Natural killer cell (primary cell): ENCODE measurements at regions of chr12 and their contacts with region 1.

Region 1: GRCh38 chr12:32455607-32456071 is 56.3 kb downstream of the FGD4 start:
- DNase-seq: peak in 1 of 2 donors; percentile 64
- ATAC-seq: peak in 2 of 3 donors; percentile 49 to 53
- H3K4me3 ChIP-seq: no peak overlapping the region
- H3K4me3 Mint-ChIP-seq: peak overlapping the region; percentile 17
- H3K27ac ChIP-seq: no peak overlapping the region
- H3K27ac Mint-ChIP-seq: no peak overlapping the region
- H3K4me1 ChIP-seq: no peaks in the 10 kb centered on the region
- H3K4me1 Mint-ChIP-seq: no peaks in the 10 kb centered on the region
- H3K27me3 ChIP-seq: no peaks in the 10 kb centered on the region
- H3K27me3 Mint-ChIP-seq: peaks cover 0 to 3% of the 10 kb centered on the region in 2 donors
- CTCF ChIP-seq: peak; percentile 71

Region 2: GRCh38 chr12:32016680-32017482 is 438.8 kb before region 1 on chr12:
- intact Hi-C with region 1: no loop called
- DNase-seq: no peak
- ATAC-seq: no peak
- H3K4me3 ChIP-seq: no peak overlapping the region
- H3K4me3 Mint-ChIP-seq: no peak overlapping the region
- H3K27ac ChIP-seq: no peak overlapping the region
- H3K27ac Mint-ChIP-seq: no peak overlapping the region
- H3K4me1 ChIP-seq: no peaks in the 10 kb centered on the region
- H3K4me1 Mint-ChIP-seq: peaks cover 14 to 19% of the 10 kb centered on the region in 2 donors
- H3K27me3 ChIP-seq: no peaks in the 10 kb centered on the region
- H3K27me3 Mint-ChIP-seq: no peaks in the 10 kb centered on the region
- CTCF ChIP-seq: no peak

Region 3: GRCh38 chr12:32467959-32468863 is 12.6 kb after region 1 on chr12:
- intact Hi-C with region 1: no loop called
- DNase-seq: no peak
- ATAC-seq: peak in 2 of 3 donors; percentile 21 to 55
- H3K4me3 ChIP-seq: no peak overlapping the region
- H3K4me3 Mint-ChIP-seq: peak overlapping the region; percentile 45
- H3K27ac ChIP-seq: no peak overlapping the region
- H3K27ac Mint-ChIP-seq: peak overlapping the region; percentile 62
- H3K4me1 ChIP-seq: peaks cover 23% of the 10 kb centered on the region
- H3K4me1 Mint-ChIP-seq: peaks cover 7 to 19% of the 10 kb centered on the region in 2 donors
- H3K27me3 ChIP-seq: no peaks in the 10 kb centered on the region
- H3K27me3 Mint-ChIP-seq: no peaks in the 10 kb centered on the region
- CTCF ChIP-seq: no peak

Region 4: GRCh38 chr12:32501835-32502333 is 46.2 kb after region 1 on chr12:
- intact Hi-C with region 1: no loop called
- DNase-seq: no peak
- ATAC-seq: no peak
- H3K4me3 ChIP-seq: no peak overlapping the region
- H3K4me3 Mint-ChIP-seq: no peak overlapping the region
- H3K27ac ChIP-seq: no peak overlapping the region
- H3K27ac Mint-ChIP-seq: no peak overlapping the region
- H3K4me1 ChIP-seq: peaks cover 10% of the 10 kb centered on the region
- H3K4me1 Mint-ChIP-seq: peaks cover 0 to 9% of the 10 kb centered on the region in 2 donors
- H3K27me3 ChIP-seq: no peaks in the 10 kb centered on the region
- H3K27me3 Mint-ChIP-seq: no peaks in the 10 kb centered on the region
- CTCF ChIP-seq: no peak

Region 5: GRCh38 chr12:32516230-32516629 is 60.6 kb after region 1 on chr12:
- intact Hi-C with region 1: loop called (anchors 10 kb)
- DNase-seq: no peak
- ATAC-seq: no peak
- H3K4me3 ChIP-seq: no peak overlapping the region
- H3K4me3 Mint-ChIP-seq: no peak overlapping the region
- H3K27ac ChIP-seq: no peak overlapping the region
- H3K27ac Mint-ChIP-seq: no peak overlapping the region
- H3K4me1 ChIP-seq: no peaks in the 10 kb centered on the region
- H3K4me1 Mint-ChIP-seq: no peaks in the 10 kb centered on the region
- H3K27me3 ChIP-seq: no peaks in the 10 kb centered on the region
- H3K27me3 Mint-ChIP-seq: peaks cover 0 to 6% of the 10 kb centered on the region in 2 donors
- CTCF ChIP-seq: no peak

Region 6: DNA sequence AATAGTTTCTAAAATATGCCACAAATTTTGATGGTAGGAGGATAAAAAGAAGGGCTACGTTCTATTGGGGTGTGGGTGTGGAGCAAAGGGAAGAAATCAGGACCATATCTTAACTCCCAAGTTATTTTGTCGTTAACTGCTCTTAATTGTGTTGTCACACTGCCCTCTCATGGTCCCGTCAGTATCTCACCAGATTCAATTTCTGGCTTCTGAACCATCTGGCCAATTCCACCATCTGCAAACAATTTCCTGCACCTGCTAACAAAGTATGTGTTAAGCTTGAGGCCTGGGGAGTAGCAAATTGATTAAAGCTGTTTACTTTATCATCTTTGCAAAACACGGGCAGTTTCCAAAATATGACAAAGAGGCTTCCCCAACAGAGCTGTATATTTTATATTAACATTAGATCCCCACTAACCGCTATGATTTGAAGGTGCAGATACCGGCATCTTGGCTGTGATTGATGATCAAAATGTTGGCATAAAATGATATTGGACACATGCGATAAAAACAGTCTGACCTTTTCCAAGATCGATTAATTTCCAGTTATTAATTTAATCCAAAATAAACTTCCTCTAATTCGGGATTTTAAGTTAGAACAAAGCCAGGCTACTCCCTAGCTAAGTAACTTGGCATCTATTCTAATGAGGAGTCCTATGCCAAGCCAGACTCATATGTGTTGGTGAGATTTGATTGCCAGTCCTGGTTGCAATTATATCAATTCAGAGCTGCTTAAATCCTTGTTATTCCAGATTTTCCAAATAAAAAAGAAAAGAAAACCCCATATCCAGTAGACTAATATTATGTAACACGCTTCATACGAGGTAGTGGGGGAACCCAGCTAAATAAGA is 216.5 kb after region 1 on chr12:
- intact Hi-C with region 1: loop called (anchors 1 kb)
- DNase-seq: peak in 1 of 2 donors; percentile 46
- ATAC-seq: peak in 1 of 3 donors; percentile 52
- H3K4me3 ChIP-seq: no peak overlapping the region
- H3K4me3 Mint-ChIP-seq: no peak overlapping the region
- H3K27ac ChIP-seq: no peak overlapping the region
- H3K27ac Mint-ChIP-seq: no peak overlapping the region
- H3K4me1 ChIP-seq: no peaks in the 10 kb centered on the region
- H3K4me1 Mint-ChIP-seq: no peaks in the 10 kb centered on the region
- H3K27me3 ChIP-seq: no peaks in the 10 kb centered on the region
- H3K27me3 Mint-ChIP-seq: peaks cover 0 to 4% of the 10 kb centered on the region in 2 donors
- CTCF ChIP-seq: no peak

Region 7: GRCh38 chr12:32755654-32756475 is 300.2 kb after region 1 on chr12 and contains the start of gene YARS2:
- intact Hi-C with region 1: loop called (anchors 1 kb)
- DNase-seq: peak; percentile 69 to 97
- ATAC-seq: peak; percentile 77 to 85 (median 80)
- H3K4me3 ChIP-seq: peak within 1 kb of the TSS; percentile 85
- H3K4me3 Mint-ChIP-seq: peak within 1 kb of the TSS; percentile 89
- H3K27ac ChIP-seq: peak within 1 kb of the TSS; percentile 82
- H3K27ac Mint-ChIP-seq: peak within 1 kb of the TSS; percentile 85 to 88
- H3K4me1 ChIP-seq: peaks cover 14% of the 10 kb centered on the region
- H3K4me1 Mint-ChIP-seq: peaks cover 16 to 17% of the 10 kb centered on the region in 2 donors
- H3K27me3 ChIP-seq: no peaks in the 10 kb centered on the region
- H3K27me3 Mint-ChIP-seq: peaks cover 0 to 6% of the 10 kb centered on the region in 2 donors
- CTCF ChIP-seq: peak; percentile 79
- total RNA-seq, gene YARS2: 9.2 to 15.9 (median 9.3) TPM